Caco-2 (cell line): ENCODE measurements at regions of chr7 and their contacts with region 1.

Region 1: DNA sequence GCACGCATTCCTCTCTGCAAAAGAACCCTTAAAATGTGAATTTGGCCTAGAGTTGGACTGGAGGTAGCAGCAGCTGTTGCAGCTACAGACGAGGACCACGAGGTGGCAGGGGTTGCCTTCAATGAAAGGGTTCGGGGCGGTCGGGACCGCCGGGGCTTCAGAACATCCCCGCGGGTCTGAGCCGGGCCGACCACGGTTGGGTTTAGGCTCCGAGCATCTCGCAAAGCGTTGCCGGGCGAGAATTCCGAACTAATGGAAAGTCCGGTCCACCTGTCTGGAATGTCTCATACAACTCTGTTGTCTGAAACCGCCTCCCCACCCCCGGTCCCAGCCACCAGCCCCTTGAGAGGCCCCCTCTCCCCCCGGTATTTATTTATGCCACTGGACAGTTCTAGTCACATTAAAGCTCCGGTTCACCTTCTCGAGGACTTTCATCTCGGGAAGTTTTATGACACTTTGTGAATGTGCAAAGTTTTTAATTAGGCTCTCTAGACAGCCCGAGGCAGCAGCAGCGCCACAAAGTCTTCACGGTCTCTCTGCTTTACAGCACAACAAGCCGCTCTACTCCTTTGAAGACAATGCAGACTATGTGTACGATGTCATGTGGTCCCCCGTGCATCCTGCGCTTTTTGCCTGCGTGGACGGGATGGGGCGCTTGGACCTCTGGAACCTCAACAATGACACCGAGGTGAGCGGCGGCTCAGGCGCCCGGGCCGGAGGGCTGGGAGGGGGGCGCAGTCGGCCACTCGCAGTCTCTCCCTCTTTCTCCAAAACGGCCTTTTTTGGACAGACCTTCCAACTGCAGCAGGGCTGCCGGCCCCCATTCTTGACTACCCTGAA is 246.2 kb downstream of the SLC25A13 start:
- DNase-seq: peak; percentile 62 to 75
- H3K4me3 ChIP-seq: peak overlapping the region; percentile 30
- H3K4me3 Mint-ChIP-seq: peak overlapping the region; percentile 72
- H3K27ac Mint-ChIP-seq: no peak overlapping the region
- H3K4me1 ChIP-seq: 0 out of 2 replicates have a peak, but pooled peaks cover 3% of the 10 kb centered on the region
- H3K4me1 Mint-ChIP-seq: no peaks in the 10 kb centered on the region
- H3K27me3 ChIP-seq: no peaks in the 10 kb centered on the region
- H3K27me3 Mint-ChIP-seq: peaks cover 5% of the 10 kb centered on the region
- CTCF ChIP-seq: peak; percentile 91 to 92

Region 2: DNA sequence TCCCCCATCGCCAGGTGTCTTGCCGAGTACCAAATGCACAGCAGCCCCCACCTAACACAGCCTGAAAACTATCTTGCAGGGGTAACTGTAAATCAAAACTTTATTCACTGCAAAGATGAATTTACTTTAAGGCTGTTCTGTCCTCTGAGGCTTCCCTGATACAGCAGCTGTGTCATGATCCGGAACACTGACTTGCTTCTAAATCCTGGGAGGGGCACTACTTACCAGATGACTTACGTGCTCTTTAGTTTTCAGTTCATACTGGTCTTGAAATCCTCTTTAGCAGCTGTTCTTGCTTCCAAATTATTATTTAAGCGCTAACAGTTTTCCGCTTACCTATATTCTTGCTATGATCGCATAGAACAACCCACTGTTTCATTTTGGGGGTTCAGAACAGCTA is 298.5 kb before region 1 on chr7:
- CTCF ChIA-PET with region 1: no interaction called
- POLR2A ChIA-PET with region 1: no interaction called
- intact Hi-C with region 1: no loop called
- DNase-seq: no peak
- H3K4me3 ChIP-seq: no peak overlapping the region
- H3K4me3 Mint-ChIP-seq: no peak overlapping the region
- H3K27ac Mint-ChIP-seq: no peak overlapping the region
- H3K4me1 ChIP-seq: peaks cover 5% of the 10 kb centered on the region; the same call in 1 of the 2 replicates
- H3K4me1 Mint-ChIP-seq: no peaks in the 10 kb centered on the region
- H3K27me3 ChIP-seq: 0 out of 2 replicates have a peak, but pooled peaks cover 2% of the 10 kb centered on the region
- H3K27me3 Mint-ChIP-seq: peaks cover 18% of the 10 kb centered on the region
- CTCF ChIP-seq: no peak

Region 3: DNA sequence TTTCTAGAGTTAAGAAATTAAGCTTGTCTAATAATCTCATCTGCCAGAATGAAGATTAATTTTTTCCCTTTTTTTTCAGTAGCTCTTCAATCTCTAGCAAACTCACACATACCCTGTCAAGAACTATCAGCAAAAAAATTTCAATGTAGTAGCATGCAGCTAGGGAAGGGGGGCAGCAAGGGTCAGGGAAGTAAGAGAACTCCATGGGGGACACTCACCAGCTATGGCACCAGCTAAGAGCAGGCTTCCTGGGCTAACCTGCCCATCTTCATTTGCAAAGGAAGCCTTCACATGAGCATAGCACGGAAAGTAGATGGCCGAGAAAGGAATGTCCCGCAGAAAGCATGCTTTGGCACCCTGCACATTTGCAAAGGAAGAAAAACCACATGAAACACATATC is 55.8 kb after region 1 on chr7:
- CTCF ChIA-PET with region 1: interaction called, 7 read pairs
- POLR2A ChIA-PET with region 1: no interaction called
- intact Hi-C with region 1: loop called (anchors 5 kb)
- DNase-seq: peak in 1 of 2 experiments; percentile 17
- H3K4me3 ChIP-seq: no peak overlapping the region
- H3K4me3 Mint-ChIP-seq: no peak overlapping the region
- H3K27ac Mint-ChIP-seq: no peak overlapping the region
- H3K4me1 ChIP-seq: peaks cover 9% of the 10 kb centered on the region
- H3K4me1 Mint-ChIP-seq: peaks cover 10% of the 10 kb centered on the region
- H3K27me3 ChIP-seq: no peaks in the 10 kb centered on the region
- H3K27me3 Mint-ChIP-seq: no peaks in the 10 kb centered on the region
- CTCF ChIP-seq: peak in 1 of 2 experiments; percentile 16

Region 4: DNA sequence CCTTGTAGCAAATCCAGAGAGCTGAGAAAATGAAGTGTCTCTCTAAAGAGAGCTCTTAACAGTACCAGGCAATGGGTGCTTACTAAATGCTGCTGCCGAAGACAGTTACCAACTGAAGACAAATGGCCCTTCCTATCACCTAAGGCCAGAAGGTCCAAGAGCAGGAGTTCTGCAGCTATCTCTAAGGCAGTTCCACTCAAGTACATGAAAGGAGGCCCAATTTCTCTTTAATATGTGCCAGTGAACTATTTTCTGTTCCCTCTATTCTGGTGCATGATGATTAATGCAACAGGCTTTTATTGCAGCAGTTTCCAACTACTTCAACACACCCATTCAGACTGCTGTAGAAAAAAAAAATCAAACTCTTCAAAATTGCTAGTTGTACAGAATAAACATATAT is 123.7 kb after region 1 on chr7:
- CTCF ChIA-PET with region 1: no interaction called
- POLR2A ChIA-PET with region 1: no interaction called
- intact Hi-C with region 1: loop called (anchors 1 kb)
- DNase-seq: no peak
- H3K4me3 ChIP-seq: no peak overlapping the region
- H3K4me3 Mint-ChIP-seq: no peak overlapping the region
- H3K27ac Mint-ChIP-seq: peak overlapping the region; percentile 36
- H3K4me1 ChIP-seq: peaks cover 8% of the 10 kb centered on the region; the same call in 1 of the 2 replicates
- H3K4me1 Mint-ChIP-seq: peaks cover 23% of the 10 kb centered on the region
- H3K27me3 ChIP-seq: no peaks in the 10 kb centered on the region
- H3K27me3 Mint-ChIP-seq: no peaks in the 10 kb centered on the region
- CTCF ChIP-seq: no peak

Region 5: GRCh38 chr7:97027427-97028234 is 951.9 kb after region 1 on chr7:
- CTCF ChIA-PET with region 1: interaction called, 4 read pairs
- POLR2A ChIA-PET with region 1: no interaction called
- intact Hi-C with region 1: loop called (anchors 1 kb)
- DNase-seq: peak; percentile 70 to 77
- H3K4me3 ChIP-seq: no peak overlapping the region
- H3K4me3 Mint-ChIP-seq: peak overlapping the region; percentile 51
- H3K27ac Mint-ChIP-seq: no peak overlapping the region
- H3K4me1 ChIP-seq: no peaks in the 10 kb centered on the region; the same call in 1 of the 2 replicates
- H3K4me1 Mint-ChIP-seq: peaks cover 6% of the 10 kb centered on the region
- H3K27me3 ChIP-seq: no peaks in the 10 kb centered on the region; the same call in 1 of the 2 replicates
- H3K27me3 Mint-ChIP-seq: peaks cover 34% of the 10 kb centered on the region
- CTCF ChIP-seq: peak; percentile 82 to 85